Sciatic nerve (tissue), 2 donors: ENCODE measurements at regions of chr5 and their contacts with region 1.

Region 1: GRCh38 chr5:31854181-31855133 is 215.5 kb downstream of the PDZD2 start:
- DNase-seq: peak; percentile 70
- ATAC-seq: peak; percentile 76

Region 2: GRCh38 chr5:31096238-31096865 is 758.1 kb before region 1 on chr5:
- intact Hi-C with region 1: no loop called
- DNase-seq: no peak
- ATAC-seq: no peak

Region 3: GRCh38 chr5:31585895-31586270 is 268.6 kb before region 1 on chr5:
- intact Hi-C with region 1: no loop called
- DNase-seq: no peak
- ATAC-seq: no peak

Region 4: DNA sequence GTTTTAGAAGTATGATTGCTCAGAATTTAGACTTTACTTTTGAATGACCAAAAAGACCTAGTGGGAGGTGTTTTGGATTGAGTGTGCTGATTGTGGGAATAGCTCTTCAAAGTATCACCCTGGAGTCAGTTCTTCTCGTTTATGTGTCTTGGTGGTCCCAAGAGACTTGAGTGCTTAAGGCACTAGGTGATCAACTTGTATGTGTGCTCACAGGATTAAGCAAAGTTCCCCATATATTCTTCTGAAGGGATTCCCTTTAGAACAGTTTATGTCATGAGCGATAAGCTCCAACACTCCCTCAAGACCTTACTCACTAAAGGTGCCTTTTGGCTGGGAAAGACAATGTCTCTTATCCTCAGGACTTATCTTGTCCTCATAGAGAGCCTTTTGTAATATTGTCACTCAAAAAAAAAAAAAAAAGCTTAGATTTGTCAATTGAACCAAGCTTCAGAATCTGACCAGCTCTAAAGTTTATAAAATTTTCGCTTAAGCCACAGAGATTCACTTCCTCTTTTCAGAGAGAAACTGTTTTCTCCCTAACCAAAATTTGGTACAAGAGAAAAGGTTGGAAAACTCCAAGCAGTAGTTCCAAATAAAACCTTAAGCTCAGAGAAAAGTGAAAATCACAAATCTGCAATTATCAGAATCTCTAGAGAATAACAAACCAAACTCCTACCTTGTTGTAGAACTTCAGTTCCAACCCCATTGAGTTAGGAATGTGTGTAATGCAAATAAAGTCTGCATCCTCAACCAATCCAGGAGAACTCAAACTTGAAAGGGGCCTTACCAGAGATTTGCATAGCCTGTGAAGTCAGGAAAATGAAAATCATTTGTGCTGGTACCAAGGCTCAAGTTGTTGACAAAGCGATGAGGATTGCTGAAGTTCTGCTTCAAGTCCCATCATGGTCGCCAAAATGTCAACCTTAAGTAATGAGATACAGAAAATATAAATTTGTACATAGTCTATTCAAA is 255.5 kb before region 1 on chr5:
- intact Hi-C with region 1: no loop called
- DNase-seq: no peak
- ATAC-seq: no peak

Region 5: GRCh38 chr5:31886206-31886605 is 31.7 kb after region 1 on chr5:
- intact Hi-C with region 1: loop called (anchors 1 kb)
- DNase-seq: no peak
- ATAC-seq: peak; percentile 13